Heart left ventricle (tissue), 16 donors: ENCODE measurements at regions of chr10 and their contacts with region 1.

Region 1: DNA sequence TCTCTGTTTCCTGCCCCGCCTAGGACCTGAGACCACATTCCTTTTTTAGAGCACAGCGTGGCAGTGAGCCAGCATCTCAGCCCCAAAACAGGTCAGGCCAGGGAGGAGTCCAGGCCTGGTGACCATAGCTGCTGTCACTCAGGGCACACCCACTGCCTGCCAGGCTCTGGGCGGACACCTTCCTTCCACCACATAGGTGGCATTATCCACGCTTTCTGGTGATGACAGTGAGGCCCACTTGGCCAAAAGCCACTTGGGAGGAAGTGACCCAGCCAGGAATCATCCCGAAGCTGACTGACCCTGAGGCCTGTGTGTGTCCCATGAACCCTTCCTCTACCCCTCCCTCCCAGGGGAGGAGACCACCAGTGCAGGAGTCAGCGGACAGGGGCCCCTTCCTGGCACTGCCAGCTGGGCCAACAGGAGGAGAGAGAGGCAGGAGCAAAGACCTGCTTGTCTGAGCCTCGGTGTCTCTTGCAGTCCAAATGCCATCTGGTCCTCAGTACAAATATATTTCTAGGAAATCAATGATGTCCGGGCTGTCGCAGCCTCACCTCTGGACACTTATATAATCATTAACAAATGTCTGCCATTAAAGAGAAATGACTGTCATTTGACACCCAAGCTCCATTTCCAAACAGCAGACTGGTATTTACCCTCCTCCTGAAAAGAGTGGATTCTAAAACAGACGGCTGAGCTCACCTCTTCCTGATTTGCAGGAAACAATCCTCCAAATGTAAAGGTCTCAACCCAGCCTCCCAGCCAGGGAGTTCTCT is 63.0 kb downstream of the ABRAXAS2 start:
- DNase-seq: peak; percentile 77 to 93 (median 83)
- ATAC-seq: peak; percentile 97 to 99 (median 98)
- H3K4me3 ChIP-seq: no peak overlapping the region
- H3K27ac ChIP-seq: peak overlapping the region in 9 of 12 donors; percentile 42 to 79 (median 69)
- H3K4me1 ChIP-seq: peaks cover 0 to 14% (median 4%) of the 10 kb centered on the region in 12 donors
- H3K27me3 ChIP-seq: no peaks in the 10 kb centered on the region
- CTCF ChIP-seq: no peak
- POLR2A ChIP-seq: no peak

Region 2: DNA sequence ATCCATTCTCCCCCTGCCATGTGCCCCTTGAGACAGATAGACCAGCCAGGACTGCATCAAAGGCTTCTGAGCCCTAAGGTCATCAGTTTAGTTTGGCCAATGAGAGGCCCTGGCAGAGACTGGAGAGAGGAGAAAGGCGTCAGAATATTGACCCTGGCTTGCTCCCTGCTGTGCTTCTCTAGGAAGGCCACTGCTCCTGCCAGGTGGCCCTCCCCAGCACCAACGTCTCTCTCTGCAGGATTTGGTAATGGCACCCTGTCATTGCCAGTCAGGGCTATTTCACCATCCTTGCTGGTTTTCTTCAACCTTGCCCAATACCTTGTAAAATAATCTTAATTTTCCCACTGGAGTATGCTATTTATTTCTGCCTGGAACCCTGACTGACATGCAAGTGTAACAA is 38.5 kb after region 1 on chr10:
- intact Hi-C with region 1: loop called in 1 of 10 experiments (anchors 5 kb)
- DNase-seq: no peak
- ATAC-seq: no peak
- H3K4me3 ChIP-seq: no peak overlapping the region
- H3K27ac ChIP-seq: no peak overlapping the region
- H3K4me1 ChIP-seq: no peaks in the 10 kb centered on the region
- H3K27me3 ChIP-seq: peaks cover 0 to 6% (median 0%) of the 10 kb centered on the region in 9 donors
- CTCF ChIP-seq: no peak
- POLR2A ChIP-seq: no peak

Region 3: DNA sequence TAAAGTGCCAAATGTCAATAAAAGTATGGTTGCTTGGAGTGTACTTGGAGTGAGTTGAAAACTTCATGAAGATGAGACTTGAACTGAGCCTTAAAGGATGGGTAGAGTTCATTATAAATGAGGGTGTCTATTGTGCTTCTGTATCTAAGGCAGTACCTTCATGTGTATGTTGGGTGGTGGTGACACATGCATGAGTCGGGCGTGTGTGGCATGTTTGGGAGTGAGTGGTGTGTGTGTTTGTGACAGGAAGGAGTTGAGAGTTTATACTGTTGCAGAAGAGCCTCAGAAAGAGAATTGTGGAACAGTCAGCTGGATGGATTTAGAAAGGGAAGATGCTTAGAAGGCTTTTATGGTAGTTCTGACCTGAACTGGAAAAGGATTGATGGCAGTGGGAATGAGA is 71.3 kb after region 1 on chr10:
- intact Hi-C with region 1: no loop called
- DNase-seq: no peak
- ATAC-seq: no peak
- H3K4me3 ChIP-seq: no peak overlapping the region
- H3K27ac ChIP-seq: no peak overlapping the region
- H3K4me1 ChIP-seq: peaks cover 0 to 36% (median 21%) of the 10 kb centered on the region in 12 donors
- H3K27me3 ChIP-seq: no peaks in the 10 kb centered on the region
- CTCF ChIP-seq: no peak
- POLR2A ChIP-seq: no peak